MCF 10A (cell line): ENCODE measurements at regions of chr22 and their contacts with region 1.

Region 1: DNA sequence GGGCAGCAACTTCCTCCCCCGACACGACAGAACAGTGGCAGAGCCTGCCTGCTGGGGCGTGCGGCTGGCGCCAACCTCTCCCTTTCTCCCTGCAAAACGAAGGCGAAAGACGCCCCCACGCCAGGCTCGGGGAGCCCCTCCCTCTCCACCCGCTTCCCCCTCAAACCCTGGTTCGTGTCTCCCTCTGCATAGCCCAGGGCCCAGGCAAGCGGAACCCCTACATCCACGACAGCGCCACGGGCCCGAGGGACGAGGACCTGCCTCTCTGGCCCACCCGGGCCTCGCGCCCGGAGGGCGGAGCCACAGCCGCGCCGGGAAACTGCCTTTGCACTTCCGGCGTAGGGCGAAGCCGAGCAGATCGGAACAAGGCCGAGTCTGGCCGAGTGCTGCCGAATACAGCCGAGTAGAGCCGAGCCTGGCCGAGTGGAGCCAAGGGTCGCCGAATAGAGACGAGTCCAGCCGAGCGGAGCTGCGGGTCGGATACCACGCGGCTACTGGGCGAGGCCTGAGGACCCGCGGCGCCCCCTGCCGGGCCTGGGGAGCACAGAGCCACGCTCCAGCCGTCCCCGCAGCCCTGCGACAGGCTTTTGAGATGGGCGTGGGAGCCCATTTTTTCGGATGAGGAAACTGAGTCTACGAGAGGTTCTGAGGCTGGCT is 11.2 kb upstream of the C1QTNF6 start:
- DNase-seq: peak; percentile 97
- H3K4me3 Mint-ChIP-seq: peak overlapping the region; percentile 81
- H3K27ac Mint-ChIP-seq: peak overlapping the region; percentile 35
- H3K4me1 Mint-ChIP-seq: peaks cover 25% of the 10 kb centered on the region
- H3K27me3 Mint-ChIP-seq: no peaks in the 10 kb centered on the region
- CTCF ChIP-seq: peak; percentile 87

Region 2: DNA sequence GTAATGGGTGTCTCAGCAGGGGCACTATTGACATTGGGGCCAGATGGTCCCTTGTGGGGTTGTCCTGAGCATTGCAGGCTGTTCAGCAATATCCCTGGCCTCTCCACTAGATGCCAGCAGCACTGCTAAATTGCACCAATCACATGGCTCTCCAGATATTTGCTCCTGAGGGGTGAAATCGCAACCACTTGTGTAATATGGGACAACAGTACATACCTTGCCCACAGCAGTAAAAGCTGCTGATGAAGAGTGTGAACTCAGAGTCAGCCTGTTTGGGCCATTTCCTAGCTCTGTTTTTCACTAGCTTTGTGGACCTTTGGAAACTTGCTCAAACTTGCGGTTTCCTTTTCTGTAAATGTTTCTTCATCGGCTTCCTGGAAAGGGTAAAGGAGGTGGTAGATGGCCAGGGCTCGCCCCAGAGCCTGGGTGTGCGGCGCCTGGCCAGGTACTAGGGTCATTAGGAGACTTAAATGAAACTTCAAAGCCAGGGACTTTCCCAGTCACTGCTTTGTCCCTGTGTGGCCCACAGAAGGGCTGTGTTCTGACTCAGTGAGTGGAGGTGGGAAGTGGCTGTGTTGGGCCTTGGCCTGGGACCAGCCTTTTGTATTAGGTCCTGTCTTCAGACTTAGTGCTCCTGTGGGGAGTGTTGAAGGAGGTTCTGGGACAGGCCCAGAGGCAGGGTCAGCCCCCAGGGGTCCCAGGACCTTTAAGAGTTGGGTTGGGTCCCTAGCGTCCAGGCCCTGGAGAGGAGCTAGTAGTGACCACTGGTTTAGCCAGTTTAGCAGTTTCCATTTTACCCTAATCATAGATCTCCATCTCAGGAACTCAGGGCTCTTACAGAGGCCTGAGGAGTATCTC is 325.3 kb before region 1 on chr22:
- CTCF ChIA-PET with region 1: interaction called, 3 read pairs
- POLR2A ChIA-PET with region 1: no interaction called
- intact Hi-C with region 1: loop called (anchors 10 kb)
- DNase-seq: peak; percentile 97
- H3K4me3 Mint-ChIP-seq: peak overlapping the region; percentile 29
- H3K27ac Mint-ChIP-seq: peak overlapping the region; percentile 90
- H3K4me1 Mint-ChIP-seq: peaks cover 29% of the 10 kb centered on the region
- H3K27me3 Mint-ChIP-seq: peaks cover 31% of the 10 kb centered on the region
- CTCF ChIP-seq: peak; percentile 51

Region 3: GRCh38 chr22:36885476-36885875 is 313.8 kb before region 1 on chr22:
- CTCF ChIA-PET with region 1: no interaction called
- POLR2A ChIA-PET with region 1: no interaction called
- intact Hi-C with region 1: no loop called
- DNase-seq: no peak
- H3K4me3 Mint-ChIP-seq: no peak overlapping the region
- H3K27ac Mint-ChIP-seq: no peak overlapping the region
- H3K4me1 Mint-ChIP-seq: no peaks in the 10 kb centered on the region
- H3K27me3 Mint-ChIP-seq: peaks cover 39% of the 10 kb centered on the region
- CTCF ChIP-seq: no peak

Region 4: GRCh38 chr22:37166675-37167066 is 32.6 kb before region 1 on chr22:
- CTCF ChIA-PET with region 1: interaction called, 23 read pairs
- POLR2A ChIA-PET with region 1: interaction called, 14 read pairs
- intact Hi-C with region 1: loop called (anchors 1 kb)
- DNase-seq: peak; percentile 75
- H3K4me3 Mint-ChIP-seq: no peak overlapping the region
- H3K27ac Mint-ChIP-seq: no peak overlapping the region
- H3K4me1 Mint-ChIP-seq: peaks cover 6% of the 10 kb centered on the region
- H3K27me3 Mint-ChIP-seq: peaks cover 22% of the 10 kb centered on the region
- CTCF ChIP-seq: peak; percentile 75

Region 5: GRCh38 chr22:37210041-37210803 is 11.0 kb after region 1 on chr22:
- CTCF ChIA-PET with region 1: interaction called, 14 read pairs
- POLR2A ChIA-PET with region 1: interaction called, 3 read pairs
- intact Hi-C with region 1: no loop called
- DNase-seq: no peak
- H3K4me3 Mint-ChIP-seq: no peak overlapping the region
- H3K27ac Mint-ChIP-seq: no peak overlapping the region
- H3K4me1 Mint-ChIP-seq: peaks cover 7% of the 10 kb centered on the region
- H3K27me3 Mint-ChIP-seq: no peaks in the 10 kb centered on the region
- CTCF ChIP-seq: no peak

Region 6: GRCh38 chr22:37273126-37273845 is 74.1 kb after region 1 on chr22:
- CTCF ChIA-PET with region 1: no interaction called
- POLR2A ChIA-PET with region 1: no interaction called
- intact Hi-C with region 1: no loop called
- DNase-seq: peak; percentile 35
- H3K4me3 Mint-ChIP-seq: no peak overlapping the region
- H3K27ac Mint-ChIP-seq: no peak overlapping the region
- H3K4me1 Mint-ChIP-seq: no peaks in the 10 kb centered on the region
- H3K27me3 Mint-ChIP-seq: no peaks in the 10 kb centered on the region
- CTCF ChIP-seq: no peak

Region 7: DNA sequence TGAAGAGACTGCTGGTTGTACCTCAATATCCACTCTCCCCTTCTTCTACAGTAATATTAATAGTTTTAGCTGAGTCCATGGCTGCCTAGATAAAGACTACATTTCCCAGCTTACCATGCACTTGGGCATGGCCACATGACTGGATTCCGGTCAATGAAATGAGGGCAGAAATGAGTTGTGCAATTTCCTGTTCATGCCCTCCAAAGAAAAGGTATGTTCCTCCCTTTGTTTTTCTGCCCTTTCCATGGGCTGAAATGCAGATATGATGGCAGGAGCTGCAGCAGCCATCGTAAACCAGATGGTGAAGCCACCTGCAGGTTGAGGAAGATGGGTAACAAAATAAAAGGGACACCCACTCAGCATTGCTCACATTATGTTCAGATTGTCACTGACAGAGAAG is 243.3 kb after region 1 on chr22:
- CTCF ChIA-PET with region 1: no interaction called
- POLR2A ChIA-PET with region 1: no interaction called
- intact Hi-C with region 1: no loop called
- DNase-seq: peak; percentile 63
- H3K4me3 Mint-ChIP-seq: no peak overlapping the region
- H3K27ac Mint-ChIP-seq: no peak overlapping the region
- H3K4me1 Mint-ChIP-seq: no peaks in the 10 kb centered on the region
- H3K27me3 Mint-ChIP-seq: no peaks in the 10 kb centered on the region
- CTCF ChIP-seq: no peak